SK-N-SH (cell line): ENCODE measurements at regions of chr7 and their contacts with region 1.

Region 1: GRCh38 chr7:31122649-31123058 is 70.5 kb downstream of the ADCYAP1R1 start:
- DNase-seq: peak; percentile 74
- H3K4me3 ChIP-seq: no peak overlapping the region; a peak in 1 of 4 replicates
- H3K27ac ChIP-seq: no peak overlapping the region
- H3K4me1 ChIP-seq: peaks cover 0 to 2% of the 10 kb centered on the region in 2 experiments; a peak in 2 of 4 replicates
- H3K27me3 ChIP-seq: no peaks in the 10 kb centered on the region; the same call in 1 of the 2 replicates
- CTCF ChIP-seq: peak; percentile 99
- EP300 ChIP-seq: no peak
- RAD21 ChIP-seq: peak; percentile 98

Region 2: GRCh38 chr7:30780941-30781340 is 341.7 kb before region 1 on chr7:
- CTCF ChIA-PET with region 1: interaction called, 11 read pairs
- POLR2A ChIA-PET with region 1: no interaction called
- DNase-seq: peak; percentile 48
- H3K4me3 ChIP-seq: no peak overlapping the region
- H3K27ac ChIP-seq: peak overlapping the region in 1 of 2 experiments; percentile 12; a peak in 1 of 4 replicates
- H3K4me1 ChIP-seq: peaks cover 0 to 17% of the 10 kb centered on the region in 2 experiments; a peak in 1 of 4 replicates
- H3K27me3 ChIP-seq: no peaks in the 10 kb centered on the region
- CTCF ChIP-seq: no peak
- EP300 ChIP-seq: no peak; a peak in 1 of 4 replicates
- RAD21 ChIP-seq: no peak

Region 3: DNA sequence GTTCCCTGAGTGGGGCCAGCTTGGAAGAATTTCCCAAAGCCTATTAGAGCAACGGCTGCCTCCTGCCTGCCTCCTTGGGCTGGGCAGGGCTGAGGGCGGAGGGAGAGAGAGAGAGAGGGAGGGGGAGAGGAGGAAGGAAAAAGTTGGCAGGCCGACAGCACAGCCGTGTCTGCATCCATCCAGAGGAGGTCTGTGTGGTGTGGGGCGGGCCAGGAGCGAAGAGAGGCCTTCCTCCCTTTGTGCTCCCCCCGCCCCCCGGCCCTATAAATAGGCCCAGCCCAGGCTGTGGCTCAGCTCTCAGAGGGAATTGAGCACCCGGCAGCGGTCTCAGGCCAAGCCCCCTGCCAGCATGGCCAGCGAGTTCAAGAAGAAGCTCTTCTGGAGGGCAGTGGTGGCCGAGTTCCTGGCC is 211.1 kb before region 1 on chr7 and contains the start of gene AQP1:
- CTCF ChIA-PET with region 1: interaction called, 11 read pairs
- POLR2A ChIA-PET with region 1: no interaction called
- DNase-seq: peak; percentile 67
- H3K4me3 ChIP-seq: no peak within 1 kb of the TSS; a peak in 1 of 4 replicates
- H3K27ac ChIP-seq: peak within 1 kb of the TSS in 1 of 2 experiments; percentile 86; a peak in 2 of 4 replicates
- H3K4me1 ChIP-seq: peaks cover 13 to 79% of the 10 kb centered on the region in 2 experiments; a peak in 3 of 4 replicates
- H3K27me3 ChIP-seq: no peaks in the 10 kb centered on the region
- CTCF ChIP-seq: no peak
- EP300 ChIP-seq: no peak
- RAD21 ChIP-seq: no peak
- polyA plus RNA-seq, gene AQP1: 1.7 and 2.4 TPM in 2 replicates

Region 4: GRCh38 chr7:30996256-30996655 is 126.4 kb before region 1 on chr7:
- CTCF ChIA-PET with region 1: interaction called, 1,191 read pairs
- POLR2A ChIA-PET with region 1: no interaction called
- DNase-seq: no peak
- H3K4me3 ChIP-seq: no peak overlapping the region
- H3K27ac ChIP-seq: no peak overlapping the region
- H3K4me1 ChIP-seq: no peaks in the 10 kb centered on the region; a peak in 1 of 4 replicates
- H3K27me3 ChIP-seq: no peaks in the 10 kb centered on the region
- CTCF ChIP-seq: no peak
- EP300 ChIP-seq: no peak
- RAD21 ChIP-seq: no peak

Region 5: DNA sequence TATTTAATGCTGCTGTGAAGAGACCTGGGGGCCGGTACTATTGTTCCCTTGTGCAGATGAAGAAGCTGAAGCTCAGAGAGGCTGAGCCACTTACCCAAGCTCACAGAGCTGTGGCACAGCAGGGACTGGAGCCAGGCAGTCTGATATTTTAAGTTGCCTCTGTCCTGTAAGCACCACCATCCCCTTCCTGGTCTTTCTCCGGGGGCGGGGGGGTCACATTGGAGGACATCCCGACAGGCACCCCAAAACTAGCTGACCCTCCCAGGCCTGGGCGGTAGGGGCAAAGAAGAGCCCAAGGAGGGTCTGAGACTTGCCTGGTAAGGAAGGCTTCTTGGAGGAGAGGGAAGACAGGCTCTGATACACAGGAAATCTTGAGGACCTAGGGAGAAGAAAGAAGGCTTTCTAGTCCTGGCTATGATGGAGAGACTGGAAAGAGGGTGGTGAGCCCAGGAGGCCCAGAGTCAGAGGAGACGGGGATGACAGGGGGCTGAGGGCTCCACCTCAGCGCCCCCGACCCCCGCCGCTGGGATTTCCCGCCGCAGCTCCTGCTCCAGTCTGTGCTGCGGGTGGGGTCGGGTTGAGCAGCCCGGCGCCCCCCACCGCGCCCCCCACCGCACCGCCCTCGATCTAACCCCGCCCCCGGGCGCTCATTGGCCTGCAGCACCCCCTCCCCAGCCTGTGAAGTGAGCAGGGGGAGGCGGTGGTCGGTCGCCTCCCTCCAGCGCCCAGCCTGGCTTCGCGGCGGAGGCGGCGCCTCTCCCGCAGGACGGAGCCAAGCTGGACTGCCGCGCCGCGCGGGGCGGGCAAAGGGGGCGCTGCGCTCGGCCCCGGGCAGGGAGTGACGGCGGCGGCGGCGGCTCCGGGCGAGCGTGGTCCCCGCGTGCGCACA is 70.8 kb before region 1 on chr7 and contains the start of gene ADCYAP1R1:
- CTCF ChIA-PET with region 1: interaction called, 337 read pairs
- POLR2A ChIA-PET with region 1: interaction called, 4 read pairs
- DNase-seq: peak; percentile 99
- H3K4me3 ChIP-seq: peak within 1 kb of the TSS; percentile 29 to 55; a peak in 3 of 4 replicates
- H3K27ac ChIP-seq: peak within 1 kb of the TSS in 1 of 2 experiments; percentile 59; a peak in 2 of 4 replicates
- H3K4me1 ChIP-seq: peaks cover 0 to 68% of the 10 kb centered on the region in 2 experiments; a peak in 2 of 4 replicates
- H3K27me3 ChIP-seq: peaks cover 48% of the 10 kb centered on the region
- CTCF ChIP-seq: no peak
- EP300 ChIP-seq: no peak
- RAD21 ChIP-seq: no peak
- polyA plus RNA-seq, gene ADCYAP1R1: 0.08 and 0.71 TPM in 2 replicates

Region 6: DNA sequence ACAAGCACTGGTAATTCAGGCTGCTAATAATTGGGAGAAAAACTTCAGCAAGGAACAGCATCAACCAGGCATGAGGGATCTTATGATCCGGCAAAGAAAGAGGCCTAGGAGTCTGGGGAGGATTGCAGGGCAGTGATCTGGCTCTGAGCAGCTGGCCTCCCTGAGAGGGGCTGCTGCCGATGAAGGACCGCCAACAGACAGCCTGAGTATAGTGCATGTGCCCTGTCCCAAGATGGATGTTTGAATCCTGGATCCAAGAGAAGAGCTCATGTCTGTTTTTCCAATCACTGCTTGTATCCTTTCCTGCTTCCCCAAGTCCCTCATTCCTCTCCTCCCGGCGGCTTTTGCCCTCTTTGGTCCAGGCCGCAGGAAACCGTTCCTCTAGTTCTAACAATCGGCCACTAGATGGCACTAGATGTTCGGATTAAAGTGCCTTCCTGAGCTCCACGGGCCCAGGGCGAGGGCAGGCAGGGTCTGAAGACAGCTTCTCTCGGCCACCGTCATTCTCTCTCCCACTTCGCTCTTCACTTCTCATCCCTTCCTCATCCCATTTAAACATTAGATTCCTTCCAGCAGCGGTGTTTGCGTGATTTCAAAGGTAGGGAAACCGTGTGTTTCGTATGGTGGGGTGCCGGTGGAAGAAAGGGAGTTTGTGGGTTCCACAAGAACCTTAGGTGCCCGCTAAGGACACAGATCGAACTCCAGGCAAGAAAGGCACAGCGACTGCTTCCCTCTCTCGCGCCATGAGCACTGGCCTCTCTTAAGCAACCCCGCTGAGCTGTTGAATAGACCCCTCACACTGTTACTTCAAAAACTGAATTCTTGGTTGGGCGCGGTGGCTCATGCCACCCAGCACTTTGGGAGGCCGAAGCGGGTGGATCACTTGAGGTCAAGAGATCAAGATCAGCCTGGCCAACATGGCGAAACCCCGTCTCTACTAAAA is 11.9 kb after region 1 on chr7:
- CTCF ChIA-PET with region 1: interaction called, 129 read pairs
- POLR2A ChIA-PET with region 1: no interaction called
- DNase-seq: peak; percentile 86
- H3K4me3 ChIP-seq: no peak overlapping the region; a peak in 1 of 4 replicates
- H3K27ac ChIP-seq: no peak overlapping the region
- H3K4me1 ChIP-seq: no peaks in the 10 kb centered on the region; a peak in 1 of 4 replicates
- H3K27me3 ChIP-seq: peaks cover 10% of the 10 kb centered on the region; the same call in 1 of the 2 replicates
- CTCF ChIP-seq: peak; percentile 88
- EP300 ChIP-seq: no peak
- RAD21 ChIP-seq: peak; percentile 91